PC-3 (cell line): ENCODE measurements at regions of chr15 and their contacts with region 1.

Region 1: GRCh38 chr15:75508840-75509532 is 57.5 kb upstream of the SIN3A start:
- DNase-seq: peak; percentile 58
- ATAC-seq: peak; percentile 45
- H3K4me3 ChIP-seq: no peak overlapping the region
- H3K27ac ChIP-seq: no peak overlapping the region
- H3K4me1 ChIP-seq: no peaks in the 10 kb centered on the region
- H3K27me3 ChIP-seq: no peaks in the 10 kb centered on the region
- CTCF ChIP-seq: peak; percentile 72

Region 2: GRCh38 chr15:75431682-75432081 is 77.3 kb before region 1 on chr15:
- CTCF ChIA-PET with region 1: no interaction called
- POLR2A ChIA-PET with region 1: no interaction called
- intact Hi-C with region 1: no loop called
- DNase-seq: no peak
- ATAC-seq: no peak
- H3K4me3 ChIP-seq: no peak overlapping the region
- H3K27ac ChIP-seq: no peak overlapping the region
- H3K4me1 ChIP-seq: no peaks in the 10 kb centered on the region
- H3K27me3 ChIP-seq: no peaks in the 10 kb centered on the region
- CTCF ChIP-seq: no peak

Region 3: GRCh38 chr15:75468913-75469598 is 39.9 kb before region 1 on chr15:
- CTCF ChIA-PET with region 1: no interaction called
- POLR2A ChIA-PET with region 1: no interaction called
- intact Hi-C with region 1: no loop called
- DNase-seq: no peak
- ATAC-seq: no peak
- H3K4me3 ChIP-seq: no peak overlapping the region
- H3K27ac ChIP-seq: no peak overlapping the region
- H3K4me1 ChIP-seq: no peaks in the 10 kb centered on the region
- H3K27me3 ChIP-seq: no peaks in the 10 kb centered on the region
- CTCF ChIP-seq: no peak

Region 4: DNA sequence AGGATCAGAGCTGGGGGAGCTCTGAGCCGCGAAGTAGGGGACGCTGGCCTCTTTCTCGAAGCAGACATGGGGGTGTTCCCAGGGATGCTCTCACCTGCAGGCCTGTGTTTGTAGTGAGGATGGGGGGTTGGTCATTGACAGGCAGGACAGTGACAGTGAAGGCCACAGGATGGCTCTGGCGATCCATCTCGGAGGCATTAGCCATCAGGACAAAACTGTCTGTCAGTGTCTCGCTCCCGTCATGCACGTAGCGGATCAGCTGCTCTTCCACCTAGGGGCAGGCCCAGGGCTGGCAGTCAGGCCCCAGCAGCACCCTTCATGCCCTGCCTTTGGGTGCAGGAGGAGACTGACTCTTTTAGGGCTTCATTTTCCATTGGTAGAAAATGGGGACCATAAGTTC is 175.7 kb after region 1 on chr15:
- CTCF ChIA-PET with region 1: no interaction called
- POLR2A ChIA-PET with region 1: no interaction called
- intact Hi-C with region 1: loop called (anchors 1 kb)
- DNase-seq: no peak
- ATAC-seq: no peak
- H3K4me3 ChIP-seq: no peak overlapping the region
- H3K27ac ChIP-seq: no peak overlapping the region
- H3K4me1 ChIP-seq: no peaks in the 10 kb centered on the region
- H3K27me3 ChIP-seq: no peaks in the 10 kb centered on the region
- CTCF ChIP-seq: no peak